ENCODE measurements at regions of chr18 and their contacts with region 1.

Region 1: GRCh38 chr18:50441518-50441917 is 66.7 kb downstream of the SKA1 start:
- DNase-seq: no peak
- ATAC-seq: no peak
- H3K4me3 ChIP-seq: no peak overlapping the region
- H3K27ac ChIP-seq: no peak overlapping the region
- H3K4me1 ChIP-seq: no peaks in the 10 kb centered on the region
- H3K27me3 ChIP-seq: no peaks in the 10 kb centered on the region
- CTCF ChIP-seq: no peak
- EP300 ChIP-seq: no peak
- POLR2A ChIP-seq: no peak
- RAD21 ChIP-seq: no peak

Region 2: DNA sequence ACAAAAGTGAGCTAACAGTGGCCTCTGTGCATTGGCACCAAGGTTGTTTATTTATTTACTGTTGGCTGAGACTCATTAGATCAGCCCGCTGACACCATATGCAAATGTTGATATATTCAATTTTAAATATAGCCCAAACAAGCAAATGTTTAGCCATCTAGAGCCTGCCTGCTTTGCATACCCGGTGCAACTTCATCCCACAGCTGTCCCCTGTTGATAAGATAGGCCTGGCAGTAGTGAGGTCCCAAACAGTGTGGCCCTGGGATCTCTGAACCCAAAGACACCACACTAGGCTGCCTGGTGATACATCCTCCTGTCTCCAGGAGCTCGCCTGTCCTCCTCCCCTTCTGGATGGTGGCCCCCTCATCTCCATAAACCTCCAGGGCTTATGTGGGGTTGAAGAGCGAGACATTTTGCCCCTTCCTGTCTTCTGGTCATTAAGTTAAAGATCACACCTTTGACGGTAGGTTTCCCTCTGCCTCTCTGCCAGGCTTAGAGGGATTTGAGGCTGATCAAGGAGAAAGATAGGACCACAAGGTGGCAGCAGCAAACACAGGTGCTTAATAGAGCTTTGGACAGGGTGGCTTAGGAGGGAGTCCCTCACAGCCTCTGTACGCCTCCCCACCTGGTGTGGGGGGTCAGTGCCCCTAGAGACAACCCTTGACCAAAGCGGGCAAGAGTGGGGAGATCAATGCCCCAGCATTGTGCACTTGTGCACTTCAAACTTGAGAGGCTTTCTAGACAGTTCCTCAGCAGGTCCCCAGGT is 222.9 kb before region 1 on chr18:
- CTCF ChIA-PET with region 1: no interaction called
- POLR2A ChIA-PET with region 1: no interaction called
- in situ Hi-C with region 1: no loop called
- intact Hi-C with region 1: loop called (anchors 10 kb)
- DNase-seq: peak in 2 of 4 experiments; percentile 14 to 17
- ATAC-seq: peak; percentile 57; the same call in 2 of the 3 replicates
- H3K4me3 ChIP-seq: no peak overlapping the region
- H3K27ac ChIP-seq: no peak overlapping the region
- H3K4me1 ChIP-seq: 0 out of 5 replicates have a peak, but pooled peaks cover 0 to 2% of the 10 kb centered on the region in 2 experiments
- H3K27me3 ChIP-seq: no peaks in the 10 kb centered on the region; a peak in 1 of 5 replicates
- CTCF ChIP-seq: peak in 2 of 3 experiments; percentile 20 to 33; a peak in 1 of 6 replicates
- EP300 ChIP-seq: no peak
- POLR2A ChIP-seq: no peak
- RAD21 ChIP-seq: no peak